Left cardiac atrium (tissue), 4 donors: ENCODE measurements at regions of chr11 and their contacts with region 1.

Region 1: DNA sequence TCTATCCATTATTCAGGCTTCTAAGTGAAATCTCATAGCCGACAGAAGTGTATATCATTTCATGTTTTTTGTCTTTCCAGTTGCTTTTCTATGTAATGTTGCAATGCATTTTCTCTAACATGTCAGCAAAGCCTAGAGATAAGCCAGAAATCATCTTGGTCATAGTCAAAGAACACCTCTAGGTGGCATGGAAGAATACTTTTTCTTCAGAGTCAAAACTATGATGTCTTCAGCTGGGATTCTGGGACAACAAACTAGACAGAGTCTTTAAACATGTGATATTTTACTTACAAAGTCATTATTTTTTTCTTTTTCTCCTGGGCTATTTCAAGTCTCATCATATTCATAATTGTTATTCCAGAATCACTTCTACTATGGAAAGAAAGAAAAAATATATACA is 4.4 kb downstream of the GAS2 start:
- DNase-seq: no peak
- ATAC-seq: no peak

Region 2: GRCh38 chr11:22787551-22788162 is 116.8 kb after region 1 on chr11:
- intact Hi-C with region 1: loop called in 1 of 2 experiments (anchors 10 kb)
- DNase-seq: no peak
- ATAC-seq: no peak